Activated B cell treated with CpG ODN at 0.5 μM for 24 hours (primary cell): ENCODE measurements at regions of chr6 and their contacts with region 1.

Region 1: DNA sequence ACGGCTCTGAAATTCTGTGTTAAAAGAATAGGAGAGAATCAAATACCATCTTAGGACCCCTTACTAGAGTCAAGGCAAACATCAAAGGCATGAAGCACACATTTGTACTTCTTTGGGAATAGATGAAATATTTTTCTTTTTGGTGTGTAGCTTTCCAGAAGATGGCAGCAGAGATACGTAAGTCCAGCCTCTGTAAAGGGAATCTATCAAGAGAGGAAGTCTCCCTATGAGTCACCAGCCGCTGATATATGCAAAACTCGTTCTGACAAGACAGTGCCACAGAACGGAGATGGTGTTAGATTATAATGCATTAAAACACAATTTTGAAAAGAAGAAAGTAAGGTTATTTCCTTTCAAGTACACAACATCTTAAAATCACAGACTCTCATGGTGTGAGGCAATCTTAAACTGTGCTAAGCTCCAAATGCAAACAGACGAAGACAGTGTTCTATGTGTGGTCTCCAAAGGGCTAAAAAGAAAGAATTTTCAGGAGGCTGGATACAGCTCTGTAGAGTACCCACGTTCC is 120.0 kb upstream of the AGPAT4 start:
- DNase-seq: no peak
- ATAC-seq: peak; percentile 92
- H3K4me3 Mint-ChIP-seq: no peak overlapping the region
- H3K27ac Mint-ChIP-seq: no peak overlapping the region
- H3K4me1 Mint-ChIP-seq: no peaks in the 10 kb centered on the region
- H3K27me3 Mint-ChIP-seq: no peaks in the 10 kb centered on the region
- CTCF ChIP-seq: no peak

Region 2: DNA sequence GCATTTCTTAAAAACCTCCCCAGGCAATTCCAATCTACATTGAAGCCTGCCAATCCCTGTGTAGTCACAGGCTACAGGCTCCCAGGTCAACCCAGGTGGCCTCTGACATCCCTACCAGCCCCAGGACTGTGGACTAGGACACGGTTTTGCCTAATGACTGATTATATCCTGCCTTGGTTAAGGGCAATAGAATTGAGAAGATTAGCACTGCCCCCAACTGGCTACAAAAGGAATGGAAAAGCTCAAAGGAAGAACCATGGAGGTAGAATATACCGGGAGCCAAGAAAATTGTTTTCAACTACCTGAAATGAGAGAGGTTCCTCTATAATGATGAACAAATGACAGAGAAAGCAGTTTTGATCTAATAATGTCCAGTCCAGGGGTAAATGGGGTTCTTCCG is 301.1 kb after region 1 on chr6:
- CTCF ChIA-PET with region 1: no interaction called
- POLR2A ChIA-PET with region 1: no interaction called
- intact Hi-C with region 1: loop called (anchors 5 kb)
- DNase-seq: no peak
- ATAC-seq: no peak
- H3K4me3 Mint-ChIP-seq: no peak overlapping the region
- H3K27ac Mint-ChIP-seq: no peak overlapping the region
- H3K4me1 Mint-ChIP-seq: no peaks in the 10 kb centered on the region
- H3K27me3 Mint-ChIP-seq: no peaks in the 10 kb centered on the region
- CTCF ChIP-seq: no peak

Region 3: GRCh38 chr6:162727309-162728182 is 1333.6 kb after region 1 on chr6 and contains the starts of genes PACRG and PRKN:
- CTCF ChIA-PET with region 1: no interaction called
- POLR2A ChIA-PET with region 1: no interaction called
- intact Hi-C with region 1: loop called (anchors 5 kb)
- DNase-seq: peak; percentile 98
- ATAC-seq: peak; percentile 93
- H3K4me3 Mint-ChIP-seq: peak within 1 kb of the TSS; percentile 95
- H3K27ac Mint-ChIP-seq: peak within 1 kb of the TSS; percentile 81
- H3K4me1 Mint-ChIP-seq: peaks cover 10% of the 10 kb centered on the region
- H3K27me3 Mint-ChIP-seq: no peaks in the 10 kb centered on the region
- CTCF ChIP-seq: no peak
- total RNA-seq, gene PACRG: not detected in 2 replicates
- total RNA-seq, gene PRKN: 2.3 and 3.5 TPM in 2 replicates